Left lung (tissue), 14 donors: ENCODE measurements at regions of chr6 and their contacts with region 1.

Region 1: DNA sequence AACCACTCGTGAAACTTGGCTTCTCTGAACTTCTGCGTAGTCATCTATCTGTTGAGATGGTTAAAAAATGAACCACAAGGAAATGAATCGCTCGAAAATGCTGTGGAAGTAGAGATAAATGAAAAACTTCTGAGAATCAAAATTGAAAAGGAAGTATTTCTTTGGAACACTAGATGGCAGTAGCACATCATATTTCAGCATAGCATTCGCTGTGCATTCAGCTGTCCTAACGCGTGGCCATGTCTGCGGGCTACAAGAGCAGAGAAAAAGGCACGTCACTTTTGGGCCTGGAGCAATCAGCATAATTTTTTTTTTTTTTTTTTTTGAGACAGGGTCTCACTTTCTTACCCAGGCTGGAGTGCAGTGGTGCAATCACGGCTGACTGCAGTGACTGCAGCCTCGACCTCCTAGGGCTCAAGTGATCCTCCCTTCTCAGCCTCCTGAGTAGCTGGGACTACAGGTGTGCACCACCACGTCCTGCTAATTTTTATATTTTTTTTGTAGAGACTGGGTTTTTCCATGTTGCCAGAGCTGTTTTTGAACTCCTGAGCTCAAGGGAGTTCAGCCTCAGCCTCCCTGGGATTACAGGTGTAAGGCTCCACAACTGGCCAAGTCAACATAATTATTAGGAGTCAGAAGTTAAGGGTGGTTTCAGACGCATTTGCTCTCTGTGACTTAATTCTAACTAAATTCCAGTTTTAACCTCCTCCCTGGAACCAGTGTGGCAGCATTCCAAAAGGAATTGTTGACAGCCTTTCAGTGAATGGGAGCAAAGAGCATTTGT is 8.8 kb upstream of the PERP start:
- DNase-seq: peak in 3 of 4 donors; percentile 51 to 83 (median 65)
- ATAC-seq: peak; percentile 98
- H3K4me3 ChIP-seq: no peak overlapping the region
- H3K27ac ChIP-seq: no peak overlapping the region
- H3K4me1 ChIP-seq: no peaks in the 10 kb centered on the region
- H3K27me3 ChIP-seq: peaks cover 0 to 5% of the 10 kb centered on the region in 2 donors
- CTCF ChIP-seq: peak; percentile 61 to 73

Region 2: GRCh38 chr6:137866914-137867684 is 249.0 kb before region 1 on chr6 and contains the start of gene TNFAIP3:
- intact Hi-C with region 1: no loop called
- DNase-seq: peak; percentile 94 to 97 (median 95)
- ATAC-seq: peak; percentile 93
- H3K4me3 ChIP-seq: peak within 1 kb of the TSS; percentile 79 to 86
- H3K27ac ChIP-seq: peak within 1 kb of the TSS; percentile 96
- H3K4me1 ChIP-seq: peaks cover 6 to 71% of the 10 kb centered on the region in 2 donors
- H3K27me3 ChIP-seq: no peaks in the 10 kb centered on the region
- CTCF ChIP-seq: peak; percentile 80 to 90
- polyA plus RNA-seq, gene TNFAIP3: 14.6 to 19.2 (median 15.4) TPM

Region 3: GRCh38 chr6:138278326-138278725 is 162.3 kb after region 1 on chr6:
- intact Hi-C with region 1: loop called in 1 of 2 experiments (anchors 5 kb)
- DNase-seq: peak in 1 of 4 donors; percentile 61
- ATAC-seq: peak; percentile 56
- H3K4me3 ChIP-seq: no peak overlapping the region
- H3K27ac ChIP-seq: no peak overlapping the region
- H3K4me1 ChIP-seq: no peaks in the 10 kb centered on the region
- H3K27me3 ChIP-seq: no peaks in the 10 kb centered on the region
- CTCF ChIP-seq: no peak

Region 4: GRCh38 chr6:138517635-138518034 is 401.6 kb after region 1 on chr6:
- intact Hi-C with region 1: loop called in 1 of 2 experiments (anchors 10 kb)
- DNase-seq: peak in 1 of 4 donors; percentile 48
- ATAC-seq: peak; percentile 82
- H3K4me3 ChIP-seq: no peak overlapping the region
- H3K27ac ChIP-seq: no peak overlapping the region
- H3K4me1 ChIP-seq: peaks cover 0 to 15% of the 10 kb centered on the region in 2 donors
- H3K27me3 ChIP-seq: no peaks in the 10 kb centered on the region
- CTCF ChIP-seq: peak; percentile 48 to 79